Activated CD8-positive, alpha-beta memory T cell treated with anti-CD3 and anti-CD28 coated beads, Interleukin-2, amount 10 ng/mL, durations not matched to agents 7 days and 5 days (primary cell): ENCODE measurements at regions of chr3 and their contacts with region 1.

Region 1: GRCh38 chr3:153768561-153769469 is 352.4 kb upstream of the ARHGEF26 start:
- DNase-seq: peak; percentile 55
- ATAC-seq: peak; percentile 82
- H3K4me3 Mint-ChIP-seq: no peak overlapping the region
- H3K27ac Mint-ChIP-seq: no peak overlapping the region
- H3K4me1 Mint-ChIP-seq: no peaks in the 10 kb centered on the region
- H3K27me3 Mint-ChIP-seq: peaks cover 13% of the 10 kb centered on the region

Region 2: GRCh38 chr3:153043729-153044328 is 725.0 kb before region 1 on chr3:
- CTCF ChIA-PET with region 1: interaction called, 25 read pairs
- DNase-seq: no peak
- ATAC-seq: no peak
- H3K4me3 Mint-ChIP-seq: no peak overlapping the region
- H3K27ac Mint-ChIP-seq: no peak overlapping the region
- H3K4me1 Mint-ChIP-seq: peaks cover 6% of the 10 kb centered on the region
- H3K27me3 Mint-ChIP-seq: no peaks in the 10 kb centered on the region

Region 3: GRCh38 chr3:153539263-153539662 is 229.6 kb before region 1 on chr3:
- CTCF ChIA-PET with region 1: no interaction called
- DNase-seq: no peak
- ATAC-seq: no peak
- H3K4me3 Mint-ChIP-seq: no peak overlapping the region
- H3K27ac Mint-ChIP-seq: no peak overlapping the region
- H3K4me1 Mint-ChIP-seq: no peaks in the 10 kb centered on the region
- H3K27me3 Mint-ChIP-seq: no peaks in the 10 kb centered on the region

Region 4: DNA sequence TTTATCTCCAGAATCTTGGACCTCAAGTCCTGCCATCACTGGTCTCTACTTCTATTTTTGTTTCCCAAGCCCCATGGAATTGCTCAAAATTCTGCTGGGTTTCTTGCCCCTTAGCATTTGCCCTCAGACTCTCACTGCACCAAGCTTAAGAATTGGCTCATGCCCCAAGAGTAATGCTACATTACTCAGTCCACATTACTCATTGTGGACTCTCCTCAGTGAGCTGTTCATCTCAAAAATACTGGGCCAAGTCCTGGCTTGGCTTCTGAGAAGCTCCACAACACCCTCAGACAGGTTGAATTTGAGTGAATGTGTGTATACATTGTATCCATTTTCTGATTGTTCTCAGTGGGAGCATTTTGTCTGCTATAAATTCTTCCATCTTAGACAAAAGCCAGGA is 12.0 kb before region 1 on chr3:
- CTCF ChIA-PET with region 1: interaction called, 10 read pairs
- DNase-seq: no peak
- ATAC-seq: no peak
- H3K4me3 Mint-ChIP-seq: no peak overlapping the region
- H3K27ac Mint-ChIP-seq: no peak overlapping the region
- H3K4me1 Mint-ChIP-seq: no peaks in the 10 kb centered on the region
- H3K27me3 Mint-ChIP-seq: peaks cover 6% of the 10 kb centered on the region